GM12878 (cell line): ENCODE measurements at regions of chr5 and their contacts with region 1.

Region 1: DNA sequence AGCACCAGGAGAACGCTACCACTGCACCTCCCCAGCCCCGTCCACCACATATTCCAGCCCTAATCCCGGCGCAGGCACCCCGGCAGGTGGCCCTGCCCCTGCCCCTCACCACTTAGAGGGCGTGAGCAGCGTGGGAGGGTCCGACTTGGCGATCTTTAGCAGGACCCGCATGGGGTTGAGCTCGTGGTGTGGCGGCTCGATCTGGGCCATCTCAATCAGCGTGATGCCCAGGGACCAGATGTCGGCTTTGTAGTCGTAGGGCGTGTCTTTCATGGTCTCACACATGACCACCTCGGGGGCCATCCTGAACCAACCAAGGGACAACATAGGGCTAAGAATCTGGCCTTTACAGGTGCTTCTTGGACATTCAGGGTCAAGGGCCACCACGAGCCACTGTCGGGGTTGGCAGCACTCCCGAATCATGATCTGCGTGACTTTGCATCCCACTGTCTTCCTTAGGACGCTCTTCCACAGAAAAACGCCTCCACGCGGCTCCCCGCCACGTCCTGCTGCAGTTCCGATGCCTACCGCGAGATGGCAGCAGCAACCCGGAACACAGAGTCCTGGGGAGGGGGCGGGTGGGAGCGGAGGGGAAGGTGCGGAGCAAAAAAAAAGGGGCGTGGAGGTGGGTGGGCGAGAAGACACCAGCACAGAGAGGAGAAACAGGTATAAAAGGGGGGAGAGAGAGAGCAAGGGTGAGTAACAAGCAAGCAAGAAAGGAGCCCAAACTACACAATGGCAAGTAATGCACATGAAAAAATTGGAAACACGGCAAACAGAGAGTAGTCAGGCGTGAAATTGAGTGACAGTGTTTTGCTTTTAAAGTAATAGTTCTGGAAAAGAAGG is 81.3 kb downstream of the STK10 start:
- DNase-seq: peak; percentile 9
- ATAC-seq: 0 out of 3 replicates have a peak, but pooled peaks have one; percentile 1
- H3K4me3 ChIP-seq: no peak overlapping the region
- H3K27ac ChIP-seq: no peak overlapping the region; the same call in 1 of the 2 replicates
- H3K4me1 ChIP-seq: peaks cover 34% of the 10 kb centered on the region
- H3K27me3 ChIP-seq: no peaks in the 10 kb centered on the region
- CTCF ChIP-seq: peak; percentile 92 to 99 (median 95)
- EP300 ChIP-seq: no peak
- POLR2A ChIP-seq: no peak
- RAD21 ChIP-seq: peak; percentile 98

Region 2: DNA sequence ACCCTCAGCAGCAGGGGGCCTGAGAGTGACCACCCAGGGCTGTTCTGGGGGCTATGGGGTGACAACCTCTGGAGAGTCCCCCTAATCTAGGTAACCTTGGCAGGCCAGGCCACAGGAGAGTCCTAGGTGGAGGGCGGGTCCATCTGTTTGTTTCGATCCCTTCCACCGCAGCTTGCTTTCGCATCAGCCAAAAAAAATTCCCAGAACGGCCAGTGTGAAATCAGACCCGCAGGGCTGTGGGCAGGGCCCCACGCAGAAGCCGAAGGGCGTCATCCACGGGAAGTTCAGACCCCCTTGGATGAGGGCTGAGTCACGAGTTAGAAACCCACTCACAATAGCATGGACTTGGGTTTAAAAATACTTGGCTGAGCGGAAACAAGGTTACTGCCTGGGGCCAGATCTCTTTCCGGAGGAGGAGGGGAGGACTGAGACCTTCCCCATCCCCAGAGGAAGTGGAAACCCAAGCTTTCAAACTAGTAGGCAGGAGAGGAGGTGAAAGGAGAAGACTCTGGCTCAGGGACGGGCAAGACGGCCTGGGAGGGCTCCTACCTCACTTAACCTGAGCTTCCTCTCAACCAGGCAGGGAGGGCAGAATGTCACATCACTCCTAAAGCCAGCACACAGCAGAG is 72.7 kb after region 1 on chr5:
- CTCF ChIA-PET with region 1: interaction called, 162 read pairs
- POLR2A ChIA-PET with region 1: interaction called, 115 read pairs
- RAD21 ChIA-PET with region 1: interaction called, 95 read pairs
- SMC1A ChIA-PET with region 1: interaction called, 165 read pairs
- in situ Hi-C with region 1: loop called (anchors 5 kb)
- intact Hi-C with region 1: no loop called
- DNase-seq: peak; percentile 71
- ATAC-seq: peak; percentile 49
- H3K4me3 ChIP-seq: peak overlapping the region; percentile 61
- H3K27ac ChIP-seq: peak overlapping the region; percentile 96
- H3K4me1 ChIP-seq: peaks cover 78% of the 10 kb centered on the region
- H3K27me3 ChIP-seq: no peaks in the 10 kb centered on the region
- CTCF ChIP-seq: no peak
- EP300 ChIP-seq: peak in 1 of 2 experiments; percentile 65; a peak in 3 of 4 replicates
- POLR2A ChIP-seq: peak; percentile 70
- RAD21 ChIP-seq: no peak

Region 3: DNA sequence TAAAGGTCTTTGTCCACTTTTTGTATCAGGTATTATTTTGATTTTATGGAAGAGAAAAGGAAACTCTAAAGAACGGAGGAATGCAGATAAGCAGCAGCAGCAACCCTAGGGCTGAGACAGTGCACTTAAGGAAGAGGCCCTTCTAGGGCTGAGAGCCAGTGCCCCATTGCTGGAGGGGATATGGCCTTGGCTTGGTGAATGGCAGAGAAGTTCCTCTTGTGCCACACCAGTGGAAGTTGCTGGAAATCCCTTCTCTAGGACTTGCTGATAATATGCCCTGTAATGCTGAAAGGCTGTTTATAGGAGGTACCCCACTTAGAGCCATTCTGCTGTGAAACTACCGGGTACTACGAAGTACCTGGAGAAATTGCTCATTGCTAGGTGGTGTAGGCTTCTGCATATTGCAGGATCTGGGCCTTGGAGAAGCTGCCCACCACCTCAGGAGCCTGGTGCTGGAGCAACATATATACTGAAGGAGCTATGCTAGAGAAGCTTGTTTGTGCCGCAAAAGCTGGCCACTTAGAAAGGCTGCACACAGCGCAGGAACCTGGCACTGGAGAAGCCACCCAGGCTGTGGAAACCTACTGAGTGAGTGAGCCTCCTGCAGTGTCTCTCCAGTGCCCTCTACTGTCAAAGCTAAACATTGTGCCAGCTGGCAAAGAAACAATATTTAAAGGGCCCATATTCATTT is 186.5 kb after region 1 on chr5:
- CTCF ChIA-PET with region 1: interaction called, 25 read pairs
- POLR2A ChIA-PET with region 1: interaction called, 3 read pairs
- RAD21 ChIA-PET with region 1: interaction called, 17 read pairs
- SMC1A ChIA-PET with region 1: interaction called, 6 read pairs
- in situ Hi-C with region 1: loop called (anchors 5 kb)
- intact Hi-C with region 1: loop called (anchors 1 kb)
- DNase-seq: no peak
- ATAC-seq: peak; percentile 100
- H3K4me3 ChIP-seq: no peak overlapping the region
- H3K27ac ChIP-seq: no peak overlapping the region
- H3K4me1 ChIP-seq: no peaks in the 10 kb centered on the region
- H3K27me3 ChIP-seq: no peaks in the 10 kb centered on the region
- CTCF ChIP-seq: peak; percentile 87 to 94 (median 93)
- EP300 ChIP-seq: no peak
- POLR2A ChIP-seq: no peak
- RAD21 ChIP-seq: peak; percentile 98

Region 4: GRCh38 chr5:172370648-172371545 is 264.2 kb after region 1 on chr5:
- CTCF ChIA-PET with region 1: interaction called, 5 read pairs
- POLR2A ChIA-PET with region 1: no interaction called
- RAD21 ChIA-PET with region 1: no interaction called
- SMC1A ChIA-PET with region 1: no interaction called
- in situ Hi-C with region 1: no loop called
- intact Hi-C with region 1: loop called (anchors 5 kb)
- DNase-seq: no peak
- ATAC-seq: peak; percentile 65
- H3K4me3 ChIP-seq: no peak overlapping the region
- H3K27ac ChIP-seq: no peak overlapping the region
- H3K4me1 ChIP-seq: peaks cover 3% of the 10 kb centered on the region; the same call in 1 of the 2 replicates
- H3K27me3 ChIP-seq: no peaks in the 10 kb centered on the region
- CTCF ChIP-seq: peak; percentile 47 to 92 (median 73)
- EP300 ChIP-seq: no peak
- POLR2A ChIP-seq: no peak
- RAD21 ChIP-seq: peak; percentile 64

Region 5: GRCh38 chr5:172770675-172771438 is 664.1 kb after region 1 on chr5 and contains the start of gene DUSP1:
- CTCF ChIA-PET with region 1: no interaction called
- POLR2A ChIA-PET with region 1: no interaction called
- RAD21 ChIA-PET with region 1: no interaction called
- SMC1A ChIA-PET with region 1: no interaction called
- in situ Hi-C with region 1: no loop called
- intact Hi-C with region 1: loop called (anchors 5 kb)
- DNase-seq: no peak
- ATAC-seq: peak; percentile 76
- H3K4me3 ChIP-seq: peak within 1 kb of the TSS; percentile 73
- H3K27ac ChIP-seq: peak within 1 kb of the TSS; percentile 72
- H3K4me1 ChIP-seq: peaks cover 23% of the 10 kb centered on the region
- H3K27me3 ChIP-seq: no peaks in the 10 kb centered on the region
- CTCF ChIP-seq: peak; percentile 57 to 65 (median 59); a peak in 5 of 6 replicates
- EP300 ChIP-seq: 0 out of 4 replicates have a peak, but pooled peaks of 1 of the 2 experiments have one; percentile 32
- POLR2A ChIP-seq: peak; percentile 95
- RAD21 ChIP-seq: peak; percentile 48
- polyA plus RNA-seq, gene DUSP1: 1.4 to 1.9 TPM